ENCODE measurements at regions of chr7 and their contacts with region 1.

Region 1: GRCh38 chr7:151232091-151232916 is at the start of gene CHPF2:
- DNase-seq: peak; percentile 89
- H3K4me3 Mint-ChIP-seq: peak within 1 kb of the TSS; percentile 100
- H3K27ac Mint-ChIP-seq: peak within 1 kb of the TSS; percentile 98
- H3K4me1 Mint-ChIP-seq: peaks cover 35% of the 10 kb centered on the region
- H3K27me3 Mint-ChIP-seq: peaks cover 2% of the 10 kb centered on the region
- total RNA-seq, gene CHPF2: 45.6 and 48.5 TPM in 2 replicates

Region 2: GRCh38 chr7:151028131-151028947 is 204.0 kb before region 1 on chr7 and contains the start of gene ABCB8:
- intact Hi-C with region 1: loop called (anchors 1 kb)
- DNase-seq: peak; percentile 98
- H3K4me3 Mint-ChIP-seq: peak within 1 kb of the TSS; percentile 94
- H3K27ac Mint-ChIP-seq: peak within 1 kb of the TSS; percentile 95
- H3K4me1 Mint-ChIP-seq: peaks cover 21% of the 10 kb centered on the region
- H3K27me3 Mint-ChIP-seq: peaks cover 2% of the 10 kb centered on the region
- total RNA-seq, gene ABCB8: 56.9 and 57.9 TPM in 2 replicates

Region 3: DNA sequence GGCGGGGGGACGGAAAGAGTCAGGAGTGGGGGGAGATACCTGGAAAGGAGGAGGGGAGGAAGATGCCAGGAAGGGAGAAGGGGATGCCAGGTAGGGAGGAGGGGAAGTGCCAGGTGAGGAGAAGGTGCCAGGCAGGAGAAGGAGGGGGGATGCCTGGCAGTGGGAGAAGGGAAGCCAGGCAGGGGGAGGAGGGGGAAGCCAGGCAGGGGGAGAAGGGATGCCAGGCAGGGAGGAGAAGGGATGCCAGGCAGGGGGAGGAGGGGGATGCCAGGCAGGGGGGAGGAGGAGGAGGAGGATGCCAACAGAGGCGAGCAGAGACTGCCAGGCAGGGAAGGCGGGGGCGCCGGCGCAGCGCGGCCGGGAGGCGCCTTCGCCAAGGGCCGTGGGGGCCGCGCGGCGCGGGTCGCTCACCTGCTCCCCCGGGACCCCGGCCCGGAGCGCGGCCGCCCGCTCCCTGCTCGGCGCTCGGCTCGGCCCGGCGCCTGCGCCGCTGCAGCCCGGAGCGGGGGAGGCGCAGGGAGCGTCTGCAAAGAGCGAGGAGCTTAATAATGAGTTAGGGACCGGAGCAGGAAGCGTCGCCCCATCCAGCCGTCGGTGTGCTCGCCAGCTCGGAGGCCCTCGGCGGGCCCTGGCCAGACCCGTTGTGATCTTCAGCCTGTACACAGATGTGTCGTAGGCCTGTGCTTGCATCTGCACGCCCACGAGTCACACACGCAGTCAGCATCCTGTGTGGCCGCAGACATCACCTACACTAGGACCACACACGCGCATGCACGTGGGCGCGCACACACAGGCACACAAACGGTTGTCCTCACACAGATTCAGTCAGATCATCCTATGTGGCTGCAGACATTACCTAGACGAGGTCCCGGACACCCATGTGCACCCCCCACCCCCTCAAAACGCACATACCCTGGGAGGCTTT is 44.6 kb after region 1 on chr7:
- intact Hi-C with region 1: loop called (anchors 1 kb)
- DNase-seq: peak; percentile 47
- H3K4me3 Mint-ChIP-seq: peak overlapping the region; percentile 66
- H3K27ac Mint-ChIP-seq: peak overlapping the region; percentile 82
- H3K4me1 Mint-ChIP-seq: peaks cover 22% of the 10 kb centered on the region
- H3K27me3 Mint-ChIP-seq: peaks cover 28% of the 10 kb centered on the region

Region 4: DNA sequence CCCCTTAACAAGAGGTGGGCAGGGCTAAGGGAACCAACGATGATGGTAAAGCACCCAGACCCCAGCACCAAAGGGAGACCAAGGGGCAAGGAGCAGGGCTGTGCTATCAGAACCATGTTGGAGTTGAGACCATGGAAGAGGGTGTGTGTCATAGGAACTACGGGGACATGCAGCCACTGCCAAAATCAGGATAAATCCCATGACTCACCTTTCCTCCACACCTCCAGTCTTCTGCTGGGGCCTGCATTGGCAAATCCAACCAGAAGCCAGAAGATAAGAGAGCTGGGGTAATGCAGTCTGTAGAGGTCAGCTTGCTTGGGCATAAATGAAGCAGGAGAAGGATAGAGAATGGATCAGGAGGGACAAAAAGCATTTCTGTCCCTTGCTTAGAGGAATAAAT is 58.9 kb after region 1 on chr7:
- intact Hi-C with region 1: no loop called
- DNase-seq: no peak
- H3K4me3 Mint-ChIP-seq: no peak overlapping the region
- H3K27ac Mint-ChIP-seq: no peak overlapping the region
- H3K4me1 Mint-ChIP-seq: no peaks in the 10 kb centered on the region
- H3K27me3 Mint-ChIP-seq: peaks cover 20% of the 10 kb centered on the region

Region 5: DNA sequence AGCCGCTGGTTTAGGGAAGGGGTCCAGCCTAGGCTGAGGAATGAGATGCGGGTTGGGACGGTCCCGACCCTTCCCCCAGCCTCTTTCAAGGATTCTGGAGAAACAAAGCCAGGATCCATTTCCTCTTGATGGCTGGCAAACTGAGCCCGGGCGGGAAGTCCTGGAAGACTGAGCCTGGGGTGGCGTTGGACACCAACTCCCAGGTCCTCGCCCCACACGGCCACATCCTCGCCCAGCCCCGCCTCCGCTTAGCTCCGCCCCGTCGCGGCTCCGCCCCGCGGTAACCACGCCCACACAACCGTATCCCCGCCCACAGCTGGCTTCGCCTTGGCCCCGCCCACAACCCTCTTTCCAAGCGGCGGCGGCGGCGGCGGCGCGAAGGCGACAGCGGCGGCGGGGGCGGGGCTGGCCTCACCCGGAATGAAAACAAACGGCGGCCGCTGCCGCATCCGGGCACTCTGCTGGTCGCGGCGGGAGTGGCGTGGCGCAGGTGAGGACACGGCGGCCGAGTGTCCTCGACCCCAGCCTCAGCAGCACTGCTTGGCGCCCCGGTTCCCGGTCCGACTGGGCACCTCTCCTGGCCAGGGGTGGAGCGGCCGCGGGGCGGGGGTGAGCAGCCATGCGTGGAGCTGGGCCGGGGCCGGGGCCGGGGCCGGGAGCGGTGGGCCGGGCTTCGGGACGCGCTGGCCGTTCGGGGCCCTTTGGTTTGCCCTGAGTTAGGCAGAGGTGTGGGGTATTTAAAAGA is 109.2 kb after region 1 on chr7 and contains the start of gene NUB1:
- intact Hi-C with region 1: loop called (anchors 1 kb)
- DNase-seq: peak; percentile 92
- H3K4me3 Mint-ChIP-seq: peak within 1 kb of the TSS; percentile 83
- H3K27ac Mint-ChIP-seq: peak within 1 kb of the TSS; percentile 76
- H3K4me1 Mint-ChIP-seq: peaks cover 23% of the 10 kb centered on the region
- H3K27me3 Mint-ChIP-seq: no peaks in the 10 kb centered on the region
- total RNA-seq, gene NUB1: 40.3 and 41.2 TPM in 2 replicates

Region 6: GRCh38 chr7:151400626-151401315 is 168.5 kb after region 1 on chr7:
- intact Hi-C with region 1: no loop called
- DNase-seq: no peak
- H3K4me3 Mint-ChIP-seq: no peak overlapping the region
- H3K27ac Mint-ChIP-seq: no peak overlapping the region
- H3K4me1 Mint-ChIP-seq: no peaks in the 10 kb centered on the region
- H3K27me3 Mint-ChIP-seq: peaks cover 10% of the 10 kb centered on the region

Region 7: DNA sequence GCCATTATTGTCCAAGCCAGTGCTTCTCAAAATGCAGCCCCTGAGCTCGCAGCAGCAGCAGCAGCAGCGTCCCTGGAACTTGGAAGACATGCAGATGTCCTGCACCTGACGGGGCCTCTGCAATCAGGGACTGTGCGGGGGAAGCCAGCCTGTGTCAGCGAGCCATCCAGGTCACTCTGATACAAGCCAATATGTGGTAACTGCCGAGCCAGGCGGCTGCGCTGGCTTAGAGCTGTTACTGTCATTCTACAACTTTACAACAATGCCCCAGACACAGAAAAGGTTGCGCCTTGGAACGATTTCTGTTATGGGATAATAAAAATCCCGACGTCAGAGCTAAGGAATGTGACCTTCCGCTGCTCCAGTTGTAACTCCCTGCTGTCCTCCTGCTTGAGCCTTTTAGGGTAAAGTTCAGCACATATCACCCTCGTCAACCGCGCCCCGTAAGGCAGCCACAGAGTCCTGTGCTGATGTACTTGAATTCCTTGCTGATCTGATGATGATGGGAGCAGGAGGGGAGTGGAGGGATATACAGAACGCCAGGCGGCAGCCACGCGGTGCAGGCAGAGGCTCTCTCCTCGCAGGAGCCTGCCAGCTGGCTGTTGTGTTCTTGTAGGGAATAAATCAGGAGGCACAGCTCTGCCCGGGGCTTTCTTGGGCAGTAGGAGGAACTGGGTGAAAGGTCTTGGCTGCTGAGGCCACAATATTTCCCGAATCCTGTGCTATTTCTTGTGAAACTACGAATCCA is 227.6 kb after region 1 on chr7:
- intact Hi-C with region 1: no loop called
- DNase-seq: no peak
- H3K4me3 Mint-ChIP-seq: no peak overlapping the region
- H3K27ac Mint-ChIP-seq: no peak overlapping the region
- H3K4me1 Mint-ChIP-seq: no peaks in the 10 kb centered on the region
- H3K27me3 Mint-ChIP-seq: no peaks in the 10 kb centered on the region

Region 8: GRCh38 chr7:151631968-151632749 is 399.9 kb after region 1 on chr7:
- intact Hi-C with region 1: loop called (anchors 5 kb)
- DNase-seq: peak; percentile 85
- H3K4me3 Mint-ChIP-seq: peak overlapping the region; percentile 94
- H3K27ac Mint-ChIP-seq: peak overlapping the region; percentile 96
- H3K4me1 Mint-ChIP-seq: peaks cover 23% of the 10 kb centered on the region
- H3K27me3 Mint-ChIP-seq: peaks cover 9% of the 10 kb centered on the region

Region 9: DNA sequence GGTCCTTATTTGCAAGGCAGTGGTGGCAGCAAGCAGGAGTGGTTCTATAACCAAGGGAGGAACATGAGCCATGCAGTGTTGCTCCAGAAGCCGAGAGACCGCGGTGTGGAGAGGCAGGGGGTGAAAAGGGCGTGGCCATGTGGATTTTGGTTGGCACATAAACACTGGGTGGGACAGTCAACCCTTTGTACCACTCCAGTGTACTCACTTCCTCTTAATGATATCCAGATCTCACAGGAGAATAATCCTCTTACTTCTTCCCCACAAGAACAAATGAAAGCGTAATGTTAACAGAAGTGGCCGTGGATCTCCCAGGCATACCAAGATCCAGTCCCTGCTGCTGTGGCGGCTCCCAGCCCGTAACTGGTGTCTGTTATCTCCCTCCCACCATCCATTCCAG is 1401.2 kb after region 1 on chr7:
- intact Hi-C with region 1: no loop called
- DNase-seq: no peak
- H3K4me3 Mint-ChIP-seq: no peak overlapping the region
- H3K27ac Mint-ChIP-seq: no peak overlapping the region
- H3K4me1 Mint-ChIP-seq: no peaks in the 10 kb centered on the region
- H3K27me3 Mint-ChIP-seq: peaks cover 2% of the 10 kb centered on the region

Measured in activated T-helper 1 cell treated with anti-CD3 and anti-CD28 coated beads, Interleukin-12 subunit alpha, Interleukin-12 subunit beta, Interleukin-2, Interleukin-4 antibody, amounts not matched to agents 30 ng/mL and 10 ng/mL and 1 ng/mL, durations not matched to agents 14 hours and 24 hours and 36 hours (primary cell).